Mammary epithelial cell (primary cell): ENCODE measurements at regions of chr20 and their contacts with region 1.

Region 1: GRCh38 chr20:1041845-1042390 is 39.8 kb upstream of the RSPO4 start:
- DNase-seq: no peak
- H3K4me3 ChIP-seq: no peak overlapping the region
- H3K27ac ChIP-seq: no peak overlapping the region
- H3K4me1 ChIP-seq: no peaks in the 10 kb centered on the region
- H3K27me3 ChIP-seq: no peaks in the 10 kb centered on the region
- CTCF ChIP-seq: no peak

Region 2: DNA sequence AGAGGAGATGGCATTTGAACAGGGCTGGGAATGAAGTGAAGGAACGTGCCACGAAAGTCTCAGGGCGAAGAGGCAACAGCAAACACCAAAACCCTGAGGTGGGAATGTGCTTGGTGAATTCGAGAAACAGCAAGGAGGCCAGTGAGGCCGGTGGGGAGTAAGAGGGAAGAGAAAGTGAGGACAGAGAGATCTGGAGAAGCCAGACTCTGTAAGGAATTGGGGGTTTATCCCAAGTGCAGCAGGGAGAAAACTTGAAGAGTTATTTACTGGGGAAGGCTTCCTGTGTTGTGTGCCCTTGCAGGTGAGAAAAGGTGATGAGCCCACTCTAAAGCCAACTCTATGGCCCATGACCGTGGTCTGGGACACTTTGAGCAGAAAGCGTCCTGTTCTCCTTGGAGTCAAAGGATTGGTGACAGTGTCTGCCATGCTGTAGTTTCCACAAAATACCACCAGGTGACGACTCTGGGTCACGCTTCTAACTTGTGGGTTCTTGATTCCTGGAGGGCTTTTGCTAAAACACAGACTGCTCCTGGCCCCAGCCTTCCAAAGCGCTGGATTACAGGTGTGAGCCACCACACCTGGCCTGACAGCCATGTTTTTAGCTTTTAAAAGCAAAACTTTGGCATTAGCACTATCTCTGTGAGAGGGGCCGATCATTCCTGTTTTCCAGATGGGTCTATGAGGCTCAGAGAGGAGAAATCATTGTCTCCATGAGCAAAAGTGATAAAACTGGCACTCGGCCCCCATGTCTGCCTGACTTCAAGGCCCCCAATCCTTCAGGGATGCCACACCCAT is 480.3 kb before region 1 on chr20:
- CTCF ChIA-PET with region 1: no interaction called
- dilution Hi-C with region 1: loop called (anchors 10 kb)
- in situ Hi-C with region 1: no loop called
- intact Hi-C with region 1: no loop called
- DNase-seq: peak; percentile 50
- H3K4me3 ChIP-seq: no peak overlapping the region
- H3K27ac ChIP-seq: no peak overlapping the region
- H3K4me1 ChIP-seq: no peaks in the 10 kb centered on the region
- H3K27me3 ChIP-seq: no peaks in the 10 kb centered on the region
- CTCF ChIP-seq: peak; percentile 97 to 100

Region 3: GRCh38 chr20:902898-903629 is 138.9 kb before region 1 on chr20:
- CTCF ChIA-PET with region 1: no interaction called
- dilution Hi-C with region 1: loop called (anchors 5 kb)
- in situ Hi-C with region 1: no loop called
- intact Hi-C with region 1: no loop called
- DNase-seq: no peak
- H3K4me3 ChIP-seq: no peak overlapping the region
- H3K27ac ChIP-seq: no peak overlapping the region
- H3K4me1 ChIP-seq: peaks cover 7% of the 10 kb centered on the region
- H3K27me3 ChIP-seq: no peaks in the 10 kb centered on the region
- CTCF ChIP-seq: no peak

Region 4: GRCh38 chr20:986733-987355 is 55.1 kb before region 1 on chr20:
- CTCF ChIA-PET with region 1: no interaction called
- dilution Hi-C with region 1: loop called (anchors 10 kb)
- in situ Hi-C with region 1: no loop called
- intact Hi-C with region 1: no loop called
- DNase-seq: peak; percentile 30
- H3K4me3 ChIP-seq: no peak overlapping the region
- H3K27ac ChIP-seq: no peak overlapping the region
- H3K4me1 ChIP-seq: no peaks in the 10 kb centered on the region
- H3K27me3 ChIP-seq: no peaks in the 10 kb centered on the region
- CTCF ChIP-seq: no peak

Region 5: GRCh38 chr20:1108437-1108920 is 66.6 kb after region 1 on chr20:
- CTCF ChIA-PET with region 1: no interaction called
- dilution Hi-C with region 1: loop called (anchors 5 kb)
- in situ Hi-C with region 1: no loop called
- intact Hi-C with region 1: no loop called
- DNase-seq: peak; percentile 24
- H3K4me3 ChIP-seq: no peak overlapping the region
- H3K27ac ChIP-seq: no peak overlapping the region
- H3K4me1 ChIP-seq: no peaks in the 10 kb centered on the region
- H3K27me3 ChIP-seq: no peaks in the 10 kb centered on the region
- CTCF ChIP-seq: peak; percentile 78 to 84

Region 6: DNA sequence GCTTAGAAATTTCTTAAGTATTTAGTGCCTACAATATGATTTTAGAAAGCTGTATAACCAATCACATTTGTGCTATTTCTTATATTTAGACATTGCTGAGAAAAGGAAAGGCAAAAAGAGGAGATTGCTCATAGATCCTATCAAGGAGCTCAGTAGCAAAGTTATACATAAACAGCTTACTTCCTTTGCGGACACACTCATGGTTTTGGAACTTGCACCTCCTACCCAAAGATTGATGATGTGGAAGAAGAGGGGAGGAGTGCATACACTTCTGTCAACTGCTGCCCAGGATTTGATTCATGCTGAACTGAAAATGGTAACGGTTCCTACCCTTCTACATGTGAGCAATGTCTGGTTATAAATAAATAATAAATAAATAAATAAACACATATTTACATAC is 200.6 kb after region 1 on chr20:
- CTCF ChIA-PET with region 1: no interaction called
- dilution Hi-C with region 1: loop called (anchors 10 kb)
- in situ Hi-C with region 1: no loop called
- intact Hi-C with region 1: no loop called
- DNase-seq: peak; percentile 34
- H3K4me3 ChIP-seq: no peak overlapping the region
- H3K27ac ChIP-seq: no peak overlapping the region
- H3K4me1 ChIP-seq: no peaks in the 10 kb centered on the region
- H3K27me3 ChIP-seq: peaks cover 9% of the 10 kb centered on the region
- CTCF ChIP-seq: no peak